A673 (cell line): ENCODE measurements at regions of chr12 and their contacts with region 1.

Region 1: DNA sequence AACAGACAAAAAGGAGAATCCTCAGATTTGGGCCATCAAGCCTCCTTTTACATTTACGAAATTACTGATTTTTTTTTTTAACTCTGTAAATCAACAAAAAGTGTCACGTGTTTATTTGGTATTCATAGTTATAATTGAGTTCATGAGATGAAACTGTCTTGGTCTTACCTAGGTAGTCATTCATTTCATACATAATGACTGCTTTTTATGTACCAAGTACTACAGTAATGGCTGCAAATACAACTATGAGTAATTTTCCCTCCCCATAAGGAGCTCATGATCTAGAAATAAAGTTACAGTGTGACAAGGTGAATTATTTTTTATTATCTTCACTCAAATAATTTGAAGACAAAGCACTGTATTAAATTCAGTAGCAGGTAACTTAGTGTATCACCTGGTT is 6.4 kb upstream of the TBK1 start:
- DNase-seq: no peak
- H3K4me3 ChIP-seq: no peak overlapping the region
- H3K27ac ChIP-seq: no peak overlapping the region
- H3K4me1 ChIP-seq: no peaks in the 10 kb centered on the region
- H3K27me3 ChIP-seq: no peaks in the 10 kb centered on the region
- CTCF ChIP-seq: no peak

Region 2: DNA sequence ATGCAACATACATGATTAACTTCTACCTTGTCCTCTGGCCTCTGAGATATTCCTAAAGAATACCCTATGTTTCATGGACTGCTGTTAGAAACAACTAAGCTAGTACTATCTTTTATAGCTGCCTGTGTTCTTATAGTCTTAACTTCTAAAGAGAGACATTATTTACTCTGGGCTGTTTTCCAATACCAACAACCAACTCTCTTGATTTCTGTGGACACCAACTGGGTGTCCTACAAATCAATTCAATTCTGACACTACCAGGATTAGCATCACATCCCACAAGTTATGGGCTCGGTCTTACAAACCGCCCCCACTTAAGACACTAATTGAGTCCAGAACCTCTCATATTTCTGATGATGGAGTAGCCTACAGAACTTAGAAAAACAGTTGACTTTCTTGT is 33.0 kb before region 1 on chr12:
- CTCF ChIA-PET with region 1: no interaction called
- POLR2A ChIA-PET with region 1: no interaction called
- intact Hi-C with region 1: loop called (anchors 5 kb)
- DNase-seq: no peak
- H3K4me3 ChIP-seq: no peak overlapping the region
- H3K27ac ChIP-seq: no peak overlapping the region
- H3K4me1 ChIP-seq: peaks cover 14% of the 10 kb centered on the region
- H3K27me3 ChIP-seq: no peaks in the 10 kb centered on the region
- CTCF ChIP-seq: no peak